H1 (cell line): ENCODE measurements at regions of chr9 and their contacts with region 1.

Region 1: GRCh38 chr9:16039218-16039987 is 486.6 kb downstream of the CCDC171 start:
- DNase-seq: peak; percentile 46 to 86
- H3K4me3 ChIP-seq: no peak overlapping the region; a peak in 1 of 8 replicates
- H3K27ac ChIP-seq: no peak overlapping the region
- H3K4me1 ChIP-seq: peaks cover 4 to 16% (median 11%) of the 10 kb centered on the region in 4 experiments; a peak in 6 of 7 replicates
- H3K27me3 ChIP-seq: no peaks in the 10 kb centered on the region
- CTCF ChIP-seq: peak; percentile 70 to 80 (median 79)
- EP300 ChIP-seq: no peak
- POLR2A ChIP-seq: no peak
- RAD21 ChIP-seq: peak; percentile 52 to 62

Region 2: GRCh38 chr9:15936306-15936921 is 103.0 kb before region 1 on chr9:
- CTCF ChIA-PET with region 1: no interaction called
- POLR2A ChIA-PET with region 1: no interaction called
- DNase-seq: no peak
- H3K4me3 ChIP-seq: no peak overlapping the region
- H3K27ac ChIP-seq: no peak overlapping the region
- H3K4me1 ChIP-seq: no peaks in the 10 kb centered on the region
- H3K27me3 ChIP-seq: no peaks in the 10 kb centered on the region
- CTCF ChIP-seq: no peak
- EP300 ChIP-seq: no peak
- POLR2A ChIP-seq: no peak
- RAD21 ChIP-seq: no peak

Region 3: DNA sequence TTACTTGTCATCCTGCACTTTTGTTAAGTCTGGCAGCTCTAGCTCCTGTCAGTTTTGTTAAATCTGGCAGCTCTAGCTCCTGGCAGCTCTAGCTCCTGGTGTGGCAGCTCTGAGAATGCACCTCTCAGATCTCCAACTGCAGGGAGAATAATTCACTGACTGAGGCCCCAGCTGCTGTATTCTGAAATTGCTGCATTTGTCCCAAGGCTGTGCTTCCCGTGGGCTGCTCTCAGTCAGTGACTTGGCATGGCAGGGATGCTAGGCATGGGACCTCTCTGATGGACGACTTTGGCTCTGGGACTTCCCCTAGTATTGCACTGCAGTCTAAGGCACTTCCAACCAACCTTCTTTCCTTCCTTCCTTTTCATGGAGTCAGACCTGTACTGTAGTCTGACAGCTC is 10.9 kb before region 1 on chr9:
- CTCF ChIA-PET with region 1: interaction called, 16 read pairs
- POLR2A ChIA-PET with region 1: interaction called, 5 read pairs
- DNase-seq: no peak
- H3K4me3 ChIP-seq: no peak overlapping the region
- H3K27ac ChIP-seq: no peak overlapping the region
- H3K4me1 ChIP-seq: peaks cover 4 to 6% (median 5%) of the 10 kb centered on the region in 4 experiments; a peak in 4 of 7 replicates
- H3K27me3 ChIP-seq: no peaks in the 10 kb centered on the region
- CTCF ChIP-seq: no peak
- EP300 ChIP-seq: no peak
- POLR2A ChIP-seq: no peak
- RAD21 ChIP-seq: no peak

Region 4: GRCh38 chr9:16058131-16058549 is 18.7 kb after region 1 on chr9:
- CTCF ChIA-PET with region 1: interaction called, 19 read pairs
- POLR2A ChIA-PET with region 1: no interaction called
- DNase-seq: no peak
- H3K4me3 ChIP-seq: no peak overlapping the region
- H3K27ac ChIP-seq: no peak overlapping the region
- H3K4me1 ChIP-seq: peaks cover 0 to 12% (median 10%) of the 10 kb centered on the region in 4 experiments; a peak in 5 of 7 replicates
- H3K27me3 ChIP-seq: no peaks in the 10 kb centered on the region
- CTCF ChIP-seq: peak in 1 of 3 experiments; percentile 2; a peak in 1 of 4 replicates
- EP300 ChIP-seq: no peak
- POLR2A ChIP-seq: no peak
- RAD21 ChIP-seq: no peak

Region 5: DNA sequence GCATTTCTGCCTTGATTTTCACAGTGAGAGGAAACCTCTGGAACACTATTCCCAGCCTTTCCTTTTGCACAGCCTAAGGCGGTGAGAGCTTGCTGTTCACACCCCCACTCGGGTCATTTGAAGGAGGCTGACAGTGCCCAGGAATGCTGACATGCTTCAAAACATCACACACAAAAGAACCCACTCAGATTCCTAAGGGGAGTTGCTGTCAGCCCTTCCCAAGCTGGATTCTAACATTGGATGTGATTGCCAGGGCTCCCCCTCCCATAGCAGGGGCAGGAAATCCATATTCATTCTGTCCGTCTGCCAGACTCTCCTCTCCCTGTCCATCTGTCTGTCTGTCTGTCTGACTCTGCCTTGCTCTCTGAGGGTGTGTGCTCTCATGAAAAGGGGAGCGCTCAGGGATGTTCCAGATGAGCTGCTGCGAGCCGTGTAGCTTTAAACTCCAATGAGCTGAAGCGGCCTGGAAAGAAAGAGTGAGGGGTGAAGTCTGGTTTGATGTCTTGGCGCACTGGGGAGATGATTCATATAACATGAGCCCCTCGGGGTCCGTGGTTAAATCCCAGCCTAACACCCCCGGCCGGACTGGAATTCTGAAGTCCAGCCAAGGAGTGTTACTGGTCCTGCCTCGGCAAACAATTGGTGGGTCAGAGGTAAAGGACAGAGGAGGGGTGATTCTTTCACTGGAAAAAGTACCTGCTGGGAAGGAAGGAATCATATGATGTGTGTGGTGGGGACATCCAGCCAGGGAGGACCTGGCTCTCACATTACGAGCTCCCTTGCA is 30.5 kb after region 1 on chr9:
- CTCF ChIA-PET with region 1: interaction called, 10 read pairs
- POLR2A ChIA-PET with region 1: no interaction called
- DNase-seq: no peak
- H3K4me3 ChIP-seq: no peak overlapping the region
- H3K27ac ChIP-seq: no peak overlapping the region
- H3K4me1 ChIP-seq: no peaks in the 10 kb centered on the region
- H3K27me3 ChIP-seq: no peaks in the 10 kb centered on the region; a peak in 1 of 7 replicates
- CTCF ChIP-seq: no peak
- EP300 ChIP-seq: no peak
- POLR2A ChIP-seq: no peak
- RAD21 ChIP-seq: no peak